ENCODE measurements at regions of chr1 and their contacts with region 1.

Region 1: DNA sequence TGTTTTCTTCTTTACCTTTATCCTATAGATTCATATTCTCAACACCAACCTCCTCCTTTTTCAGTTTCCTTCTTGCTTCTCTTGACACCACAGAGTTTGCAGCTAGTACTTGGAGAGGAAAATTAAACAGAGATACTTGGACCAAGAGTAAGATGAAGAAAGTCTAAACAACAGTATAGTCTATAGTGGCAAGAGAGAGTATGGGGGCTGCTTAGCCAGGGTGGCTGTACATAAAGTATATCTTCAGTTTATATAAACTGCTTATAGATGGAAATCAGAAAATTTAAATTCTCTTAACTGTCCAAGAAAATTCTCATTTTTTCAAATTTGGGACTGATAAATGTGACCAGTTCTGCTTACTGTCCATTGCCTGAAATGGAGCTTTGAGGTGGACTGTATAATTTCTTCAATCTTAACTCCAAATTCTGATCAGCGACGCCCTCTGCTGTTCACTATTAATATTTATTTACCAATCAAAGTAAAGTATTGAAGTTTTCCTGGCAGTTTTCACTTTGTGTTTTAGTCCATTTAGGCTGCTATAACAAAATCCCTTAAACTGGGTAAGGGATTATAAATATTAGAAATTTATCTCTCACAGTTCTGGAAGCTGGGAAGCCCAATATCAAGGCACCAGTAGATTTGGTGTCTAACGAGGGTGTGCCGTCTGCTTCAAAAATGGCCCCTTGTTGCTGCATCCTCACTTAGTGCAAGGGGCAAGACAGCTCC is 14.8 kb upstream of the METTL18 start:
- DNase-seq: no peak
- ATAC-seq: peak; percentile 77
- H3K4me3 ChIP-seq: no peak overlapping the region
- H3K27ac ChIP-seq: no peak overlapping the region
- H3K4me1 ChIP-seq: no peaks in the 10 kb centered on the region
- H3K27me3 ChIP-seq: no peaks in the 10 kb centered on the region
- CTCF ChIP-seq: peak; percentile 25 to 54 (median 51); a peak in 5 of 6 replicates
- EP300 ChIP-seq: no peak
- POLR2A ChIP-seq: no peak
- RAD21 ChIP-seq: peak; percentile 64

Region 2: GRCh38 chr1:169586395-169587255 is 222.9 kb before region 1 on chr1 and contains the start of gene F5:
- CTCF ChIA-PET with region 1: interaction called, 21 read pairs
- POLR2A ChIA-PET with region 1: no interaction called
- RAD21 ChIA-PET with region 1: interaction called, 11 read pairs
- SMC1A ChIA-PET with region 1: interaction called, 11 read pairs
- in situ Hi-C with region 1: no loop called
- intact Hi-C with region 1: loop called (anchors 1 kb)
- DNase-seq: no peak
- ATAC-seq: peak; percentile 99
- H3K4me3 ChIP-seq: 0 out of 2 replicates have a peak within 1 kb of the TSS, but pooled peaks have one; percentile 15
- H3K27ac ChIP-seq: no peak within 1 kb of the TSS
- H3K4me1 ChIP-seq: peaks cover 5% of the 10 kb centered on the region; the same call in 1 of the 2 replicates
- H3K27me3 ChIP-seq: no peaks in the 10 kb centered on the region; a peak in 1 of 4 replicates
- CTCF ChIP-seq: peak; percentile 71 to 87 (median 77)
- EP300 ChIP-seq: no peak
- POLR2A ChIP-seq: no peak
- RAD21 ChIP-seq: peak; percentile 52
- polyA plus RNA-seq, gene F5: 0.29 to 0.46 TPM

Region 3: GRCh38 chr1:169794530-169795416 is 14.8 kb before region 1 on chr1 and contains the start of gene METTL18:
- CTCF ChIA-PET with region 1: interaction called, 20 read pairs
- POLR2A ChIA-PET with region 1: no interaction called
- RAD21 ChIA-PET with region 1: no interaction called
- SMC1A ChIA-PET with region 1: interaction called, 4 read pairs
- in situ Hi-C with region 1: no loop called
- intact Hi-C with region 1: no loop called
- DNase-seq: peak; percentile 84
- ATAC-seq: peak; percentile 95
- H3K4me3 ChIP-seq: peak within 1 kb of the TSS; percentile 86
- H3K27ac ChIP-seq: peak within 1 kb of the TSS; percentile 76
- H3K4me1 ChIP-seq: 0 out of 2 replicates have a peak, but pooled peaks cover 2% of the 10 kb centered on the region
- H3K27me3 ChIP-seq: no peaks in the 10 kb centered on the region
- CTCF ChIP-seq: no peak
- EP300 ChIP-seq: no peak
- POLR2A ChIP-seq: peak; percentile 84
- RAD21 ChIP-seq: no peak
- polyA plus RNA-seq, gene METTL18: 30.0 to 31.8 TPM

Region 4: DNA sequence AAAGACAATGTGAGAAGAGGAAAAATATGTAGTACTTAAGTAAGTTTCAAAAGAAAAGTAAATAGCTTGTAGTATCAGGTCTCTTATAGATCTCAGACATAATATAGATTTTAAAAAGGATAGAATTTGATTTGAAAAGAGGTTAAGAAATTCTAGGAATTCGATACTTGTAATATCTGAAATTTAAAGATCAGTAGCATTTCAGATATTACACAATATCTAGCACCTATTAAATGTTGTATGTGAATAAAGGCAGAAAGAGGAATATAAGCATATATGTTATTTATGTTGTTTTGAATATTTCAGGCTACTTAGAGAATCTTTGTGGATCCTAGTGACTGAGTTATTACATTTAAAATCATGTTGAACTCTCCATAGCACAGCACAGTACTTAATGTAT is 20.1 kb after region 1 on chr1:
- CTCF ChIA-PET with region 1: interaction called, 16 read pairs
- POLR2A ChIA-PET with region 1: interaction called, 4 read pairs
- RAD21 ChIA-PET with region 1: no interaction called
- SMC1A ChIA-PET with region 1: interaction called, 3 read pairs
- in situ Hi-C with region 1: no loop called
- intact Hi-C with region 1: no loop called
- DNase-seq: no peak
- ATAC-seq: no peak
- H3K4me3 ChIP-seq: no peak overlapping the region
- H3K27ac ChIP-seq: no peak overlapping the region
- H3K4me1 ChIP-seq: no peaks in the 10 kb centered on the region
- H3K27me3 ChIP-seq: no peaks in the 10 kb centered on the region
- CTCF ChIP-seq: no peak
- EP300 ChIP-seq: no peak
- POLR2A ChIP-seq: no peak
- RAD21 ChIP-seq: no peak